ENCODE measurements at regions of chr19 and their contacts with region 1.

Region 1: GRCh38 chr19:48842789-48843162 is 6.5 kb upstream of the HSD17B14 start:
- DNase-seq: peak; percentile 62

Region 2: DNA sequence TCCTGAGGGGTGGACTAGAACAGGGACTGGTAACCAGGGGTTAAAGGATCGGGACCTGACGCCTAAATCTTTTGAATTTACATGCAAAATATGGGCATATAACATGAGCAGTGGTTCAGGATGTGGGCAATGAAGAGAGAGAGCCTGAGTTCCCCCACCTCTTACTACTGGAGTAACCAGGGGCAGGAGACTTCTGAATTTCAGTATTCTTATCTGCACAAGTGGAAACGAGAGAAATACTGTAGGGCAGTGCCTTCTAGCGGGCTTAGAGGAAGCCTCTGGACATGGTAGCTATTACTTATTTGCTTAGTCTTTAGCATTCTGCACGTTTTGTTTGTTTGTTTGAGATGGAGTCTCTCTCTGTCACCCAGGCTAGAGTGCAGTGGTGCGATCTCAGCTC is 58.2 kb before region 1 on chr19:
- CTCF ChIA-PET with region 1: interaction called, 24 read pairs
- POLR2A ChIA-PET with region 1: no interaction called
- DNase-seq: no peak

Measured in HEK293T (cell line).